Transverse colon (tissue), 4 donors: ENCODE measurements at regions of chr14 and their contacts with region 1.

Region 1: GRCh38 chr14:76968621-76969063 is 59.9 kb downstream of the IRF2BPL start:
- DNase-seq: no peak
- H3K4me3 ChIP-seq: no peak overlapping the region
- H3K27ac ChIP-seq: no peak overlapping the region
- H3K4me1 ChIP-seq: peaks cover 0 to 13% (median 11%) of the 10 kb centered on the region in 4 donors
- H3K27me3 ChIP-seq: no peaks in the 10 kb centered on the region
- CTCF ChIP-seq: no peak
- EP300 ChIP-seq: no peak
- POLR2A ChIP-seq: no peak

Region 2: DNA sequence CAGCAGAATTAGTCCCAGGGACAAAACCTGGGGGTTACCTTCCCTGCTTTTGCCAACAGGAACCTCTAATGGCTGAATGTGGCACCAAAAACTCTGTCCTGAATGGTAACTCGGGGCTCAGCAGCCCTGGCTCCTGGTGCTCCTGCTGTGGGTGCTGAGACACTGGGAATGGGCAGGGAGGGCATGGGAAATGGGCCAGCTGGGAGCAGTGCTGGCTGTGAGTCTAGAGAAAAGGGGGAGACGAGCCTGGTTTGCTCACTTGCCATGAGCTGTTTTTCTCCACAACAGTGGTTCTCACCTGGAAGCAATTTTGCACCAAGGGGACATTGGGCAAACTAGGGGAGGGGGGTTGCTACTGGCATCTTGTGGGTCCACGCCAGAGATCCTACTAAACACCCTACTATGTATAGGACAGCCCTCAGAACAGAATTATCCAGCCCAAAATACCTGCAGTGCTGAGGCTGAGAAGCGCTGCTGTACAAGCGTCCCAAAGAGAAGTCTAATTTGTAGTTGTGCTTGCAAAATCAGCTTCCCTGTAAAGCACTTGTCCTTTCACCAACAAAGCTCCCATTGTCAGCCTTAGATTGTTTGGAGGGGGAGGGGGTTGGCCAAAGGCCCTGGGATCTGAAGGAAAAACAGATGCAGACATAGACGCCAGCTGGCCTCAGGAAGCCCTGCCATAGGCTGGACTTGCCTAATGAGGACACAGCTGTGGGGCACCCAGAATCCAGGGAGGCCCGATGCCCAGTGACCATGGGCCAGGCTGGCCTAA is 138.8 kb before region 1 on chr14:
- in situ Hi-C with region 1: no loop called
- intact Hi-C with region 1: no loop called
- DNase-seq: no peak
- H3K4me3 ChIP-seq: no peak overlapping the region
- H3K27ac ChIP-seq: peak overlapping the region in 2 of 4 donors; percentile 25 to 30
- H3K4me1 ChIP-seq: peaks cover 0 to 9% (median 0%) of the 10 kb centered on the region in 4 donors
- H3K27me3 ChIP-seq: no peaks in the 10 kb centered on the region
- CTCF ChIP-seq: no peak
- EP300 ChIP-seq: no peak
- POLR2A ChIP-seq: no peak

Region 3: GRCh38 chr14:76985540-76986230 is 17.0 kb after region 1 on chr14:
- in situ Hi-C with region 1: no loop called
- intact Hi-C with region 1: no loop called
- DNase-seq: no peak
- H3K4me3 ChIP-seq: no peak overlapping the region
- H3K27ac ChIP-seq: no peak overlapping the region
- H3K4me1 ChIP-seq: no peaks in the 10 kb centered on the region
- H3K27me3 ChIP-seq: no peaks in the 10 kb centered on the region
- CTCF ChIP-seq: no peak
- EP300 ChIP-seq: no peak
- POLR2A ChIP-seq: no peak

Region 4: GRCh38 chr14:77007975-77008421 is 39.4 kb after region 1 on chr14:
- in situ Hi-C with region 1: no loop called
- intact Hi-C with region 1: loop called (anchors 5 kb)
- DNase-seq: peak; percentile 83
- H3K4me3 ChIP-seq: no peak overlapping the region
- H3K27ac ChIP-seq: peak overlapping the region; percentile 74 to 80 (median 78)
- H3K4me1 ChIP-seq: peaks cover 3 to 46% (median 43%) of the 10 kb centered on the region in 4 donors
- H3K27me3 ChIP-seq: no peaks in the 10 kb centered on the region
- CTCF ChIP-seq: no peak
- EP300 ChIP-seq: peak; percentile 51
- POLR2A ChIP-seq: no peak